ENCODE measurements at regions of chr20 and their contacts with region 1.

Region 1: DNA sequence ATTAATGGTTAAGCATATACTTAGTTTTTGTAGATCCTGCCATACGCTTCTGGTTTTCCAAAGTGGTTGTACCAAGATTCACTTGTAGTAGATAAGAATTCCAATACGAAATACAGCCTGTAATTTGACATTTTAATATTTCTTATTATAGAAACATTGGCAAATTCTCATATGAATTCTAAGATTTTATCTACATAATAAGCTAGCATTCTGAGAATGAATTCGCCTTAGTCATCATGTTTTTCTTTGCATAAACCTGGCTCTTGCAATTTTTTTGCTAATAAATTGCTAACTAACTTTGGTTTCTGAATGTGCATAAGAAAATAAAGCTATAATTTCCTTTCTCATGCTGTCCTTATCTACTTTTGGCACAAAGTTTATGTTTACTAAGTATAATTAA is 673.0 kb downstream of the PTPRT start:
- DNase-seq: no peak

Region 2: DNA sequence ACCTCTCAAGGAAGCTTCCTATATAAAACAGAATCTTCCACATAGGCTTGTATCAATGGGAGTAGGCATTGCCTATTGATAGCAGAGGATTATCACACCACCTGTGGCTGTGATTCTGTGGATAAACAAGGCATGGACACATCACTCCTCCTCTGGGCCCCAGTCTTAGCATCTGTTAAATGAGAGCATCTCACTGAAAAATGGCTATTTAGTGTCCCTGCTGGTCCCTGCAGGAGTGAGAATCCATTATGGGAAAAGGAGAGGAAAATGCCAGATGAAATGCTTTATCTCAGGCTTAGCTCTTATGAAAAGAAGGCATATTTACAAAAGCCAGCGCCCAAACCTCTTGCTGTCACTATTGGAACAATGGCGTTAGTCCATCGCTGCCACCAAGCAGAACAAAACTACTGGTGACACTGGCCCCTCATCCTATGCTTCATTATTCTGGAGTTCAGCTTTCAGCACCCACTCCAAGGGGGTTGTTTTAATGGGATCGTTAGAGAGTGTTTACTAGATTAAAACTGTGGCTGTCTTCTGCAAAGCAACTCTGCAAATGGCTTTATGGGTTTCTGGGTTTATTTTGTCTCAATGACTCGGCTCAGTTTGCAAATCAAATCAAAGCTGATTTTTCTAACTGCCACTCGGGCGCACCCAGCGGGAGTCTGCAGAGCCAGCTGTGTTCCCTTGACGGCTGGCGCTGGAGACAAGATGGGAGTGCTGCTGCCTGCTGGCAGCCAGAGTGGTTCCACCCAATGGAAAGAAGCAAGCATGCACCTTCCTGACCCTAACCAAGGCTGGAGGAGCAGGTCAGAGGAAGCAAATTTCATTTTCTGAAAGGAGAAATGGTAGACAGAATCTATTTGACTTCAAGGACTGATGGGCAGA is 239.7 kb before region 1 on chr20:
- intact Hi-C with region 1: loop called in 1 of 2 experiments (anchors 5 kb)
- DNase-seq: no peak

Measured in posterior vena cava (tissue), 2 donors.